Activated B cell treated with CpG ODN at 0.5 μM for 24 hours (primary cell): ENCODE measurements at regions of chr11 and their contacts with region 1.

Region 1: DNA sequence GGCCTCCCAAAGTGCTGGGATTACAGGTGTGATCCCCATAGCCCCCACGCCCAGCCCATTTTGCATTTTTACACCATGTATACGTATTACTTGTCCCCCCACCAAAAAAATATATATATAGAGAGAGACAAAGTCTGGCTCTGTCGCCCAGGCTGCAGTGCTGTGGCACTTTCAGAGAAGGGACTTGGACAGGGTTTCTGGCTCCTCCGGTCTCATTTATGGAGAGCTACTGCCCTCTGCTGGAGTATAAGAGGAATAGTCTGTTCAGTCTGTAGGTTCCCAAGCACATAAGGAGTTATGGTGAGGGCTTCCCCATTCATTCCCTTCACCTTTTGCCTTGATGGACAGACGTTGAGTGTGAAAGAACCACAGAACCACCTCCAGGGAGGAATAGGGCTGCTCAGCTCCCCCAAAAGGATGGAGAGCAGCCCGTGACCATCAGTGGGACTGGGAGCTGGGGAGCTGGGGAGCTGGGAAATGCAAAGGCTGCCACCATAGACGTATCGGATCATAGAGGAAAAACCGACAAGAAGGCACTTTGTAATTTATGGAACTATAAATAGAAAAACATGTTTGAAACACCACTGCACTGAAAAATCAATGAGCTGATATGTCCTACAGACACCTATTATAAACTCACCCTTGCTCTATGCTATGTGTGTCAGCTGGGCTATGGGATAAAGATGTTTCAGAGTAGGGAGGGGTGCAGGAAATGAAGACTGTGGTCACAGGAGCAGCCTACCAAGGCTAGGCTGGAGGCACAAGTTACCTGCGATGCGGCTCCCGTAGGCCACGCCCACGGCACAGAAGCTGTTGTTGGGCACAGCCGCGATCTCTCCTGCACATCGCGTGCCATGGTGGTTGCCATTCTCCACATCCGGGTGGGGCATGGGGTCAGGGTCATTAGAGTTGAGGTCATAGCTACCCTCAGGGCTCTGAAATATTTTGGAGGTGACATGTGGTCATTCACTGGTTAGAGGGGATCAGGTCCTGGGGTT is 5.2 kb downstream of the PCSK7 start:
- DNase-seq: no peak
- ATAC-seq: peak; percentile 64
- H3K4me3 Mint-ChIP-seq: no peak overlapping the region
- H3K27ac Mint-ChIP-seq: peak overlapping the region; percentile 80
- H3K4me1 Mint-ChIP-seq: peaks cover 40% of the 10 kb centered on the region
- H3K27me3 Mint-ChIP-seq: no peaks in the 10 kb centered on the region
- CTCF ChIP-seq: no peak

Region 2: GRCh38 chr11:116772443-116773202 is 454.1 kb before region 1 on chr11 and contains the start of gene BUD13:
- CTCF ChIA-PET with region 1: no interaction called
- POLR2A ChIA-PET with region 1: interaction called, 3 read pairs
- intact Hi-C with region 1: loop called (anchors 1 kb)
- DNase-seq: peak; percentile 96
- ATAC-seq: peak; percentile 89
- H3K4me3 Mint-ChIP-seq: peak within 1 kb of the TSS; percentile 98
- H3K27ac Mint-ChIP-seq: peak within 1 kb of the TSS; percentile 96
- H3K4me1 Mint-ChIP-seq: peaks cover 37% of the 10 kb centered on the region
- H3K27me3 Mint-ChIP-seq: no peaks in the 10 kb centered on the region
- CTCF ChIP-seq: no peak
- total RNA-seq, gene BUD13: 18.4 and 18.8 TPM in 2 replicates

Region 3: GRCh38 chr11:116879800-116880625 is 346.7 kb before region 1 on chr11:
- CTCF ChIA-PET with region 1: interaction called, 17 read pairs
- POLR2A ChIA-PET with region 1: no interaction called
- intact Hi-C with region 1: loop called (anchors 1 kb)
- DNase-seq: no peak
- ATAC-seq: peak; percentile 72
- H3K4me3 Mint-ChIP-seq: no peak overlapping the region
- H3K27ac Mint-ChIP-seq: no peak overlapping the region
- H3K4me1 Mint-ChIP-seq: peaks cover 9% of the 10 kb centered on the region
- H3K27me3 Mint-ChIP-seq: no peaks in the 10 kb centered on the region
- CTCF ChIP-seq: no peak

Region 4: GRCh38 chr11:117143871-117144476 is 82.7 kb before region 1 on chr11 and contains the start of gene PAFAH1B2:
- CTCF ChIA-PET with region 1: interaction called, 13 read pairs
- POLR2A ChIA-PET with region 1: interaction called, 55 read pairs
- intact Hi-C with region 1: no loop called
- DNase-seq: peak; percentile 95
- ATAC-seq: peak; percentile 84
- H3K4me3 Mint-ChIP-seq: peak within 1 kb of the TSS; percentile 95
- H3K27ac Mint-ChIP-seq: peak within 1 kb of the TSS; percentile 95
- H3K4me1 Mint-ChIP-seq: peaks cover 40% of the 10 kb centered on the region
- H3K27me3 Mint-ChIP-seq: peaks cover 5% of the 10 kb centered on the region
- CTCF ChIP-seq: no peak
- total RNA-seq, gene PAFAH1B2: 71.3 and 78.7 TPM in 2 replicates

Region 5: GRCh38 chr11:117189191-117189930 is 37.3 kb before region 1 on chr11:
- CTCF ChIA-PET with region 1: interaction called, 4 read pairs
- POLR2A ChIA-PET with region 1: interaction called, 21 read pairs
- intact Hi-C with region 1: loop called (anchors 2 kb)
- DNase-seq: peak; percentile 66
- ATAC-seq: peak; percentile 87
- H3K4me3 Mint-ChIP-seq: peak overlapping the region; percentile 74
- H3K27ac Mint-ChIP-seq: peak overlapping the region; percentile 94
- H3K4me1 Mint-ChIP-seq: peaks cover 78% of the 10 kb centered on the region
- H3K27me3 Mint-ChIP-seq: no peaks in the 10 kb centered on the region
- CTCF ChIP-seq: no peak

Region 6: DNA sequence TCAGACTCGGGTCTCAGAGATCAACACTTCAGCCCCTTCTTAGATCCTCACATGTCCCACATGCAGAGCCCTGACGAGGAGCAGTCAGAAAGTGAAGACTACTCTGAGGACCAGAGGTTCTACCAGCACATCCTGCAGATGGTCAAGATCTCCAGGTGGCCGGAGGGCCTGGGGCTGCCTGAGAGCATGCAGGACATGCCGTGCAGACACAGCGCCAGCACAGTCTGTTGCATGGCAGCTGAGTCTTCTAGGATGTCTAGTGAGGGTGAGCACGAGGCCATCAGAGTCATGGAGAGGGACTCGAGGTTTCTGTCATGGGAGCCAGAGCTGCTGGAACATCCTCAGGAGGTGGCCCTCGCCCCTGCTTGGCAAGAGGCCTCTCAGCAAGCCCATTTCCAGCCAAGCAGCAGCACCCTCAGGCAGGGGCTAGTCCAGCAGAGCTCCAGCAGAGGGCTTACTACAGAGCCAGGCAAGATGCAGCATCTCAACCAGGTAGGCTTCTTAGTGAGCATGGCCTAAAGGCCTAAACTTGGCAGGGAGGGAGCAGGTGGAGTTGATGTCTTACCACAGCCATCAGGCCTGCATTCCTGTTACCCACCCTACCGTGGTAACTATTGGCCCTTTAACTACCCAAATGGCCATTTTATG is 129.6 kb after region 1 on chr11:
- CTCF ChIA-PET with region 1: no interaction called
- POLR2A ChIA-PET with region 1: no interaction called
- intact Hi-C with region 1: no loop called
- DNase-seq: no peak
- ATAC-seq: no peak
- H3K4me3 Mint-ChIP-seq: no peak overlapping the region
- H3K27ac Mint-ChIP-seq: no peak overlapping the region
- H3K4me1 Mint-ChIP-seq: no peaks in the 10 kb centered on the region
- H3K27me3 Mint-ChIP-seq: no peaks in the 10 kb centered on the region
- CTCF ChIP-seq: no peak